Gastrocnemius medialis (tissue), 4 donors: ENCODE measurements at regions of chr1 and their contacts with region 1.

Region 1: DNA sequence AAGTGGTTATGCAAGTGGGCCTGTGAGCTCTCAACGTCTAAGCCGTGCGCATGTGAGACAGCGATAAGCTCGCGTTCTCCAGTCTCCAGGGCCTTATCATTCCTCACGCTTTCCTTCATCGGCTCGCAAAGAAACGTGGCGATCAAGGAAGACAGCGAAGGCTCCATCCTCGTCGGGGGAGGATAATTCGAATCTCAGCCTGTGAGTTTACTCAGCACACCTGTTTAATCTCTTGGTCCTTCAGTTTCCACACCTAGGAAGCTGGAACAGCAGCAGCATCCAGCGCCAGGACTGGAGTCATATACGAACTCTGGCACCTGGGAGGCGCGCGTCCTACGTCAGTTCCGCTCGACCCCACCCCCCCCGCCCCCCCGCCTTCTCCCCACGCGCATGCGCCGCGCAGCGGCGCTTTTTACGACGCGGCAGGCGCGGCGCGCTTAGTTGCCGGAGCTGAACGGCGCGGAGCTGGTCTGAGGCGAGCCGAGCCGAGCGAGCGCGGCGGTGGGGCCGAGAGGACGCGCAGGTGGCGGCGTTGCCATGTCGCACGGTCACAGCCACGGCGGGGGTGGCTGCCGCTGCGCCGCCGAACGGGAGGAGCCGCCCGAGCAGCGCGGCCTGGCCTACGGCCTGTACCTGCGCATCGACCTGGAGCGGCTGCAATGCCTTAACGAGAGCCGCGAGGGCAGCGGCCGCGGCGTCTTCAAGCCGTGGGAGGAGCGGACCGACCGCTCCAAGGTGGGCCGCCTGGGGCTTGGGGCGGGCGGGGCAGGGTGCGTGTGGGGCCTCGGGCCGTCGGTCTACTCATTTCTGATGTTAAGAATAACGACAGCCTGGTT is at the start of gene PITHD1:
- DNase-seq: peak; percentile 68 to 85
- ATAC-seq: peak; percentile 77 to 90
- H3K4me3 ChIP-seq: peak within 1 kb of the TSS; percentile 63 to 98 (median 86)
- H3K27ac ChIP-seq: peak within 1 kb of the TSS; percentile 88 to 95 (median 93)
- H3K4me1 ChIP-seq: peaks cover 26 to 36% of the 10 kb centered on the region in 2 donors
- H3K27me3 ChIP-seq: no peaks in the 10 kb centered on the region
- CTCF ChIP-seq: no peak
- POLR2A ChIP-seq: peak; percentile 96
- total RNA-seq, gene PITHD1: 79.9 to 104 (median 90.3) TPM

Region 2: DNA sequence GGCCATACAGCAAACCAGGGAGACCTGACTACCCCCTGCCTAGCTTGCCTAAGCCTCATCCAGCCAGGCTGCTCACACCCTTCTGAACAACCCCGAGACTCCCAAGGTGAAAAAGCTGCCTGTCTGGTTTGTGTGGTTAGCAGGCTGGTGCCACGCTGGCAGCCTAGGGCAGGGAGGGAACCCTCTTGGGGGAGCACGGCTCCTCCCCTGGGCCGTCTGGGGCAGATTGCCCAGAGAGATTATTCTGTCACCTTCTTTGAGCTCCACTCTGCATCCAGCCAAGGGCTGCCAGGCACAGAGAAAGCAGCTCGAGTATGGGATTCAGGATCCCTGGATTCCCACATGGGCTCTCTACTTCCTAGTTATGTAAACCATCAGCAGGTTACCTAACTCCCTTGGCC is 326.2 kb before region 1 on chr1:
- in situ Hi-C with region 1: no loop called
- intact Hi-C with region 1: no loop called
- DNase-seq: peak in 1 of 2 donors; percentile 73
- ATAC-seq: peak; percentile 18 to 47
- H3K4me3 ChIP-seq: no peak overlapping the region
- H3K27ac ChIP-seq: peak overlapping the region; percentile 40 to 78 (median 69)
- H3K4me1 ChIP-seq: peaks cover 50 to 52% of the 10 kb centered on the region in 2 donors
- H3K27me3 ChIP-seq: no peaks in the 10 kb centered on the region
- CTCF ChIP-seq: no peak
- POLR2A ChIP-seq: no peak

Region 3: GRCh38 chr1:23743287-23744052 is 34.7 kb before region 1 on chr1 and contains the start of gene ELOA:
- in situ Hi-C with region 1: no loop called
- intact Hi-C with region 1: loop called (anchors 1 kb)
- DNase-seq: peak; percentile 36 to 59
- ATAC-seq: peak; percentile 87 to 89
- H3K4me3 ChIP-seq: peak within 1 kb of the TSS; percentile 85 to 97 (median 94)
- H3K27ac ChIP-seq: peak within 1 kb of the TSS; percentile 84 to 95 (median 92)
- H3K4me1 ChIP-seq: peaks cover 34 to 35% of the 10 kb centered on the region in 2 donors
- H3K27me3 ChIP-seq: no peaks in the 10 kb centered on the region
- CTCF ChIP-seq: no peak
- POLR2A ChIP-seq: peak; percentile 53 to 70
- total RNA-seq, gene ELOA: 44.7 to 73.0 (median 59.0) TPM

Region 4: DNA sequence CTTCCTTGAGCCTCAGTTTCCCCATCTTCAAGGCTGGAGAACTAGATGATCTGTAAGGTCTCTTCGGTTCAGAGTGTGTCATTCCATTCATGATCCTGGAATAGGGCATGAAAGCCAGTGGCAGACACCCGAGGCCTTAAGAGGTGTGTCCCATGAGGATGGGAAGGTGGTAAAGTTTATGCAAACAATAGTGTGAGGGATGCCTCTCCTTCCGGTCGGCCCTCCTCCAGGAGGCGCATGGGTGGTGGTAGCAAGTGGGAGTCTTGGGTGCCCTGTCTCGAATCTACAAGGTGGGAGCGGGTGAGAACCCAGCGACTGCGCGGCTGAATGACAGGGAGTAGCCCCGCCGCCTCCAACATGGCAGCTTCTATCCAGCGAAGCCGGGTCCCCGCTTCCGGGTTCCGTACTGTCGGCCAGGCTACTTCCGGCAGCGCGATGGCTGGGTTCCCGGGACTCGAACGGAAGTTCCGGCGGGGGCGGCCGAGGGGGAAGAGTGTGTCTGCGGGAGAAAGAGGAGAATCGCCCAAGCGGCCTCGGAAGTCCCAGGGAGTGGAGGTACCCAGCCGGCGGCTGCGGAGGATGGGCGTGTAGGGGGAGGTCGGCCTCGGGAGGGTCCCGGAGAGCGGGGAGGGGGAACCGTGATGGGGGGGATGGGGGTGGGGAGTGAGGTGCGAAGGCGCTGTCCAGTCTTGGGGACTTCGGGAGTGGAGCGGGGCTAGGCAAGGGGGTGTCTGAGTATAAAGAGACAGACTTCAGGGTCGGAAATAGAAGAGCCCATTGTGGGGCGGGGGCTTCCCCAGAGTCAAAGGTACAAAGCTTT is 12.7 kb after region 1 on chr1 and contains the start of gene LYPLA2:
- in situ Hi-C with region 1: no loop called
- intact Hi-C with region 1: loop called (anchors 1 kb)
- DNase-seq: peak; percentile 87
- ATAC-seq: peak; percentile 89 to 93
- H3K4me3 ChIP-seq: peak within 1 kb of the TSS; percentile 79 to 97 (median 80)
- H3K27ac ChIP-seq: peak within 1 kb of the TSS; percentile 86 to 90 (median 87)
- H3K4me1 ChIP-seq: peaks cover 24 to 26% of the 10 kb centered on the region in 2 donors
- H3K27me3 ChIP-seq: no peaks in the 10 kb centered on the region
- CTCF ChIP-seq: no peak
- POLR2A ChIP-seq: peak in 1 of 2 donors; percentile 50
- total RNA-seq, gene LYPLA2: 35.3 to 40.9 (median 36.7) TPM

Region 5: DNA sequence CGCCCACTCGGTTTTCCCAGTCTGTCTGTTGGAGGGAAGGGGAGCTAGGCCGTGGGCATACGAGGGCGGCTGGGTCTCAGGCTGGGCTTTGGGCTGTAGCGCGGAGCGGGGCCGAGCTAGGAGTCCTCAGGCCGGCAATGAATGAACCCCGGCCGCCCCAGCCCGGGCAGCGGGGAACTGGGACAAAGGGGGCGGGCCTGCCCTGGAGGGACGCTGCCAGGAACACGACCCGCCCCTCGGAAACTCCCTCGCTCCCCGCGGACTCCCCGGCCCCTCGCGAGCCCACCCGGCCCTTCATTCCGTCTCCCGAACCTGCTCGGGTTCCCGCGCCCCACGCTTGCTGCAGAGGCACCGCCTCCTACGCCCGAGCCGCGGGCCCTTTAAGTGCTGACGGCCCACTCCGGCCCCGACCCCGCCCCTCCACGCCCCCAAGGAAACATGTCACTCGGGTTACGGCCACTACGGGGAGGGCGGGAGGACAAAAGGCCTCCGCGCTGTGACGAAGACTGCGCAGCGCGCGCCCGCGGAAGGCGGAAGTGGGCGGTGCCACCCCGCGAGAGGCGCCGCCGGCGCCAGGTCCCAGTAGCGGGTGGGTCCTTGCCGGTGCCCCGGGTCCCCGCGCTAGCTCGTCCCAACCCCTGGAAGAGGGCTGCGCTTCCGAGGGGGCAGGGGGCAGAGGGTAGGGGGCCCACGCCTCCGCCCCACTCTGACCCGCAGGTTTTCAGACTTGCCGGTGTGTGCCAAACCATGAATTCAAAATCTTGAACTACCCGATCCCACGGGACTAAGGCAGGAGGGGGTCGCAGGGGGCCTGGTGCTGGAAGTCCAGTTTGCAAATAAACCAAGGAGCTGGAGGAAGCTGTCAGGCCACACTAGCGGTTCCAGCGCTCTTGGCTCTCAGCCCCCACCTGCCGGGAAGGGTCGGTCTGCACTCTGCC is 22.5 kb after region 1 on chr1 and contains the start of gene GALE:
- in situ Hi-C with region 1: no loop called
- intact Hi-C with region 1: loop called (anchors 1 kb)
- DNase-seq: peak; percentile 95 to 97
- ATAC-seq: peak; percentile 92 to 95
- H3K4me3 ChIP-seq: peak within 1 kb of the TSS; percentile 72 to 100 (median 88)
- H3K27ac ChIP-seq: peak within 1 kb of the TSS; percentile 87 to 98 (median 94)
- H3K4me1 ChIP-seq: peaks cover 16 to 25% of the 10 kb centered on the region in 2 donors
- H3K27me3 ChIP-seq: no peaks in the 10 kb centered on the region
- CTCF ChIP-seq: no peak
- POLR2A ChIP-seq: peak; percentile 79 to 86
- total RNA-seq, gene GALE: 2.9 to 5.7 (median 4.1) TPM